ENCODE measurements at regions of chr22 and their contacts with region 1.

Region 1: DNA sequence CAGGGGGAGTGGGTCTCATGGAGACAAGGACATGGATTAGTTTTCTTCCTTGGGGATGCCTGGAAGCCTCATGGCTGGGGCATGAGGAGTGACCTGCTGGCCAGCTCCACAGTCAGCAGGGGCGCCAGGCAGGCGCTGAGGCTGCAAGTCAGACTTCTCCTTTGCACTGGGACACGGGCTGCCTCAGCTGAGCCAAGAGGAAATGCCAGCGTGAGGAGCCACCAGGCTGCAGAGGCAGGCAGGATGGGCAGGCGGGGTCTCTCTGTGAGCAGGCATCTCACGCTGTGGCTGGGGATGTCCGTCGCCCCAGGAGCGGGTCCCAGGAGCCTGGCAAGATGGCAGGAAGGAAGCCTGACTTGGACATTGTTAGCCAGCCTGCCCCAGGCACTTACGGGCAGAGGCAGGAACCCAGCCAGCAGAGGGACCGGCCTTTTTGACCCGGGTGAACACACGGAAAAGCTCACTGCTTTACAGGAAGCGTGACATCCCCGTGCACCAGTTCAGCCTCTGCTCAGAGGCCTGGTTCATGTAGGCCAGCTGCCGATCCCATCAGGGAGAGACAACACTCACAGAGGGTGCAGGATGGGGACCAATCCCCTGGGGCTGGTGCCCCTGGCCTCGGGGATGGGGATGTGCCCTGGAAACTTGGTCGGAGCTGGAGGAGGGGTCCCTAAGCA is 10.2 kb downstream of the GNB1L start:
- DNase-seq: no peak
- H3K4me3 ChIP-seq: no peak overlapping the region
- H3K27ac ChIP-seq: peak overlapping the region in 3 of 4 donors; percentile 63 to 66 (median 65)
- H3K4me1 ChIP-seq: peaks cover 22 to 32% (median 26%) of the 10 kb centered on the region in 4 donors
- H3K27me3 ChIP-seq: no peaks in the 10 kb centered on the region
- CTCF ChIP-seq: peak in 1 of 3 experiments; percentile 6
- EP300 ChIP-seq: no peak
- POLR2A ChIP-seq: no peak

Region 2: DNA sequence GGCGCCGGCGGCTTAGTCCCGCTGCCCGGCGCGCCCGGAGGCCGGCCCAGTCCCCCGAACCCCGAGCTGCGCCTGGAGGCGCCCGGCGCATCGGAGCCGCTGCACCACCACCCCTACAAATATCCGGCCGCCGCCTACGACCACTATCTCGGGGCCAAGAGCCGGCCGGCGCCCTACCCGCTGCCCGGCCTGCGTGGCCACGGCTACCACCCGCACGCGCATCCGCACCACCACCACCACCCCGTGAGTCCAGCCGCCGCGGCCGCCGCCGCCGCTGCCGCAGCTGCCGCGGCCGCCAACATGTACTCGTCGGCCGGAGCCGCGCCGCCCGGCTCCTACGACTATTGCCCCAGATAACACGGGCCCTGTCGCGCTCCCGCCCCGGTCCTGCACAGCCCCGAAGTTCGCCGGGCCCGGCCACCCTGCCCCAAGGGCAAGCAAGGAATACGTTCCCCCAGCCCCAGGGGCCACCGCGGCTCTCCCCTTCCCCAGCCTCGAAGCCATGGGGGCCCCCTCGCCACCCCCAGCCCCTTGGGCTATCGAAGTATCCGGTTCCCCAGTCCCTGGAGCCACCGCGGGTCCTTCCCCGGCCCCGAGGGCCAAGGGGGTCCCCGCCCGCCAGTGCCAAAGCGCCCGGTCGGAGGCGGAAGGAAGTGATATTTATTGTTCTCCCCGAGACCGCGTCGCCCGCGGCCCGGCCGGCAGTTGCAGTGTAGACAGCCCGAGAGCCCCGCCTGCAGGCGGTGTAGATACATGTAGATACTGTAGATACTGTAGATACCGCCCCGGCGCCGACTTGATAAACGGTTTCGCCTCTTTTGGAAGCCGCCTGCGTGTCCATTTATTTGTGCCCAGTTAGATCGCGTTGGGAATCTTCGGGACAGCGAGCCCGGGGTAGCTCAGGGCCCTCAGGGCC is 77.7 kb before region 1 on chr22:
- intact Hi-C with region 1: loop called (anchors 10 kb)
- DNase-seq: no peak
- H3K4me3 ChIP-seq: peak overlapping the region; percentile 40 to 49 (median 46)
- H3K27ac ChIP-seq: no peak overlapping the region
- H3K4me1 ChIP-seq: peaks cover 17 to 32% (median 31%) of the 10 kb centered on the region in 4 donors
- H3K27me3 ChIP-seq: peaks cover 0 to 100% (median 51%) of the 10 kb centered on the region in 4 donors
- CTCF ChIP-seq: no peak
- EP300 ChIP-seq: no peak
- POLR2A ChIP-seq: no peak

Region 3: DNA sequence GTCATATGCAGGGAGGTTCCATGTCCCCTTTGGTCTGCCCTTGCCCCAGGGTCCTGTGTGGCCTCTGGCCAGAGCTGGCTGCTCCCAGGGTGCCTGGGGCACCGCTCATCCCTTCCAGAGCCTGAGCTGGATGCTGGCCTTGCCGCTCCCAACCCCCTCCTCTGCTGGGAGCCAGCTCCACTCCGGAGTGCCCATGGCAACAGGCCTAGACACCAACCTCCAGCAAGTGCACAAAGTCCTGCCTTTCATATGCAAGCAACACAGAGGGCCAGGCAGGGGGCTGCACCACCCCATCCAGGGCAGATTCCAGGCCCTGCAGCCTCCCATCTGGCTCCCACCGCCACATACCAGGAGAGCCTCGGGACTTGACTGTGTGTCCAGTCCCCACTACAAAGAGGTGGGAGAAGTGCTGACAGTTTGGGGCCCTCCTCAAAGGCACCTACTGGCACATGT is 155.7 kb after region 1 on chr22:
- intact Hi-C with region 1: no loop called
- DNase-seq: no peak
- H3K4me3 ChIP-seq: no peak overlapping the region
- H3K27ac ChIP-seq: peak overlapping the region in 2 of 4 donors; percentile 2 to 8
- H3K4me1 ChIP-seq: peaks cover 34 to 73% (median 67%) of the 10 kb centered on the region in 4 donors
- H3K27me3 ChIP-seq: no peaks in the 10 kb centered on the region
- CTCF ChIP-seq: no peak
- EP300 ChIP-seq: no peak
- POLR2A ChIP-seq: no peak